ENCODE measurements at regions of chr17 and their contacts with region 1.

Region 1: GRCh38 chr17:68327823-68328570 is 36.7 kb downstream of the ARSG start:
- DNase-seq: no peak
- H3K4me3 ChIP-seq: no peak overlapping the region
- H3K27ac ChIP-seq: peak overlapping the region; percentile 92
- H3K4me1 ChIP-seq: peaks cover 47% of the 10 kb centered on the region
- H3K27me3 ChIP-seq: no peaks in the 10 kb centered on the region
- CTCF ChIP-seq: no peak

Region 2: DNA sequence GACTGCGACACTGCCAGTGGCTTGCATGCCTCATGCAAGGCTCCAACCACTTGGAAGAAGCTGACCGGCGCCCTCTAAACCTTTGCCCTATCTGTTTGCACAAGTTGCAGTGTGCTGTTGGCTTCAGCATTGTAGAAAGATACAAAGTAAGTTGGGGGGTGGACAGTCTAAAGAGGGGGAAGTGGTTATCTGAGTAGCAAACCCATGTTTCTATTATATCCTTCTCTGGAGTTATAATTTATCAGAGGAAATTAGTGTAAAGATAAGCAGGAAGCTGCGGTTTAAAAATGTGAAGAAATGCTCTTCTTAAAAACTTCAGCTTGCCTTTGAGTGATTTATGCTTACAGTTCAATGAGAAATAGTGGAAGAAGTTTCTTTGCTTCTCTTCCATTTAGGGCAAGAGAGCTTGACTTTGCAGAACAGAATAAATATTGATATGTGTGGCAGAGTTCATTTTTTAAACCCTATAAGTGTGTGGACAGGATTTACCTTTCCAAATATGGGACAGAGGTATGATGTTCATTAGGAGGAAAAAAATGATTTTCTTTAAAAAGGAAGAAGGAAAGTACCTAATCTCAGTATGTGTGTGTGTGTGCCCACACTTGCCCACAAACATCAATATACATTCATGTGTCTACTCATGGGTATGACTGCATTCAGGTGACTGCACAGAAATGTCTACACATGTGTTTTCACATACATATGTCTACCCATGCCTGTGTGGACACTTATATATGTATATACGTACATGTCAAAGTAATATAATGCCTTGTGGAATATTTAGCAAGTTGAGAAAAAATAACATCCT is 72.1 kb before region 1 on chr17:
- CTCF ChIA-PET with region 1: no interaction called
- POLR2A ChIA-PET with region 1: no interaction called
- intact Hi-C with region 1: no loop called
- DNase-seq: no peak
- H3K4me3 ChIP-seq: no peak overlapping the region
- H3K27ac ChIP-seq: no peak overlapping the region
- H3K4me1 ChIP-seq: peaks cover 6% of the 10 kb centered on the region; the same call in 1 of the 2 replicates
- H3K27me3 ChIP-seq: no peaks in the 10 kb centered on the region
- CTCF ChIP-seq: no peak

Region 3: GRCh38 chr17:68291844-68292695 is 35.9 kb before region 1 on chr17:
- CTCF ChIA-PET with region 1: no interaction called
- POLR2A ChIA-PET with region 1: no interaction called
- intact Hi-C with region 1: no loop called
- DNase-seq: peak; percentile 76 to 78
- H3K4me3 ChIP-seq: peak overlapping the region; percentile 76
- H3K27ac ChIP-seq: peak overlapping the region; percentile 58
- H3K4me1 ChIP-seq: peaks cover 20% of the 10 kb centered on the region
- H3K27me3 ChIP-seq: no peaks in the 10 kb centered on the region
- CTCF ChIP-seq: peak; percentile 33; the same call in 1 of the 2 replicates

Region 4: GRCh38 chr17:68302066-68302601 is 25.9 kb before region 1 on chr17:
- CTCF ChIA-PET with region 1: no interaction called
- POLR2A ChIA-PET with region 1: interaction called, 14 read pairs
- intact Hi-C with region 1: no loop called
- DNase-seq: no peak
- H3K4me3 ChIP-seq: no peak overlapping the region
- H3K27ac ChIP-seq: no peak overlapping the region
- H3K4me1 ChIP-seq: peaks cover 22% of the 10 kb centered on the region
- H3K27me3 ChIP-seq: no peaks in the 10 kb centered on the region
- CTCF ChIP-seq: no peak

Region 5: GRCh38 chr17:68346448-68346847 is 18.5 kb after region 1 on chr17:
- CTCF ChIA-PET with region 1: interaction called, 19 read pairs
- POLR2A ChIA-PET with region 1: no interaction called
- intact Hi-C with region 1: no loop called
- DNase-seq: no peak
- H3K4me3 ChIP-seq: no peak overlapping the region
- H3K27ac ChIP-seq: no peak overlapping the region
- H3K4me1 ChIP-seq: no peaks in the 10 kb centered on the region
- H3K27me3 ChIP-seq: no peaks in the 10 kb centered on the region
- CTCF ChIP-seq: no peak

Region 6: DNA sequence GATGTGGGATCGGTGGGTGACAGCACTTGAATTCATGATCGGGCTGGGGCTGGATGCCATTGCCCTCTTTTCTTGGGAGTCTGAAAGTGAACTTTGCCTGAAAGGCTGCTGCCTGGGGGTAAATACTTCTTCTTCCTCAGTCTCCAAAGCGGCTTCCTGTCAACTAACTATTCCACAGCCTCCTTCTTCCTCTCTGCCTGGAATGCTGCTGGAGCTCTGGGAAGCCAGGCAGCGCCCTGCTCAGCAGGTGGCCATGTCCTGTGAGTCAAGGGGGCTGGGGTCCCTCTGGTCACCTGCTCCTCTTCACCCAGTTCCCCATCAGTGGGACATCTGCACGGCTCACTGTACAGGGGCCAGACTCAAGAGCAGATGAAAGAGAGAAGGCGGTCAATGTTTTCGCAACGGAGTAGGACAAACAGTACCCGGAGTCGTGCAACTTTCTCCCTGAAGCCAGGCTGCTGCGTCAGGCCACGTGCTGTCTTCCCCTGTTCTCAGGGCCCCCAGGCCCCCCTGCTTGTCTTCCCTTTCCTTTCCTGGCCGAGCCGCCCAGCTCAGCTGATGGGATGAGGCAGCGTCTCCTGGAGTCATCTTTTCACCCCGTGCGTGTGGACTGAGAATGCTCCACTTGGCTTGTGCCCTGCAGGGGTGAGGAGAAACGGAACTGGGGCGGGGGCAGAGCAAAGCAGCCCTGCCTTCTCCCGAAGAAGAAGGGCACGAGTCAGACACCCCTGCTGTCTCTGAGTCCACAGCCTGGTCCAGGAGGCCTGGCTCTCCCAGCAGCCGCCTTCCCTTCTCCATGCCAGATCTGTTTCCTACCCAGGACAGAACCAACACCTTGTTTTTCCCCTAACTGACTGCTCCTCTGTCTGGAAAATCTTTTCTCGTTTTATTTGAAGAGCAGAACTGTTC is 50.1 kb after region 1 on chr17:
- CTCF ChIA-PET with region 1: no interaction called
- POLR2A ChIA-PET with region 1: no interaction called
- intact Hi-C with region 1: loop called (anchors 1 kb)
- DNase-seq: peak; percentile 49 to 75
- H3K4me3 ChIP-seq: peak overlapping the region; percentile 49
- H3K27ac ChIP-seq: peak overlapping the region; percentile 87
- H3K4me1 ChIP-seq: peaks cover 63% of the 10 kb centered on the region
- H3K27me3 ChIP-seq: no peaks in the 10 kb centered on the region
- CTCF ChIP-seq: no peak

Region 7: GRCh38 chr17:68533887-68534694 is 206.1 kb after region 1 on chr17:
- CTCF ChIA-PET with region 1: no interaction called
- POLR2A ChIA-PET with region 1: interaction called, 12 read pairs
- intact Hi-C with region 1: no loop called
- DNase-seq: no peak
- H3K4me3 ChIP-seq: no peak overlapping the region
- H3K27ac ChIP-seq: no peak overlapping the region
- H3K4me1 ChIP-seq: no peaks in the 10 kb centered on the region
- H3K27me3 ChIP-seq: no peaks in the 10 kb centered on the region
- CTCF ChIP-seq: peak; percentile 58

Measured in PC-9 (cell line).